Panc1 (cell line): ENCODE measurements at regions of chr11 and their contacts with region 1.

Region 1: GRCh38 chr11:77547863-77548551 is 41.7 kb upstream of the AQP11 start:
- DNase-seq: peak; percentile 66
- ATAC-seq: peak; percentile 88
- H3K4me3 ChIP-seq: no peak overlapping the region; a peak in 1 of 4 replicates
- H3K27ac ChIP-seq: no peak overlapping the region
- H3K4me1 ChIP-seq: peaks cover 4% of the 10 kb centered on the region; the same call in 1 of the 2 replicates
- H3K27me3 ChIP-seq: no peaks in the 10 kb centered on the region
- CTCF ChIP-seq: peak; percentile 78

Region 2: DNA sequence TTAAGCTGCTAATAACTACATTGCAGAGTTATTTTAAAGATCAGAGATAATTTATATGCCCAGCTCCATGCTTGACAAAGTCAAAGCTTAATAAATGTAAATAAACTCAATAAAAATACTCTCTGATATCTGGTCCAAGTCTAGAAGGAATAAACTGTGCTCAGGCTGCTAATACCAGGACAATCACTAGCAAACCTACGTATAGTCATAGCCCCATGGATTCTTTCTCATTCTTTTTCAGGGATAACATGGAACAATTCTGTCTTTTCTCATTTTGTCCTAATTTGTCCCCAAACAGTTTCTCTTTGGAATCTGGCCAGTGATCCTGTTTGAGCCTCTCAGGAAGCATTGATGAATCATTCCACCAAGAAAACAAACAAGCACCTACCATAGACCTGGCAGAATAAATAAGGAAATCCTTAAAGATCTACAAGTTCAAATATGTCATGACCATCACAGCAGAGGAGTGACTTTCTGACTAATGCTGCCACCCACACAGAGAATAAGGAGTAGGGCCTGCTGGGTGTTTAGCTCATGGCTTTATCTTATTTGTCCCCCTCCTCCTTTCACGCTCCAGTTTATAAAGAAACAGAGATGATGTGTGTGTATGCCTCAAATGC is 527.9 kb before region 1 on chr11:
- CTCF ChIA-PET with region 1: interaction called, 11 read pairs
- POLR2A ChIA-PET with region 1: no interaction called
- in situ Hi-C with region 1: no loop called
- intact Hi-C with region 1: no loop called
- DNase-seq: peak; percentile 66
- ATAC-seq: peak; percentile 95
- H3K4me3 ChIP-seq: no peak overlapping the region
- H3K27ac ChIP-seq: peak overlapping the region; percentile 64
- H3K4me1 ChIP-seq: peaks cover 21% of the 10 kb centered on the region
- H3K27me3 ChIP-seq: no peaks in the 10 kb centered on the region
- CTCF ChIP-seq: no peak

Region 3: DNA sequence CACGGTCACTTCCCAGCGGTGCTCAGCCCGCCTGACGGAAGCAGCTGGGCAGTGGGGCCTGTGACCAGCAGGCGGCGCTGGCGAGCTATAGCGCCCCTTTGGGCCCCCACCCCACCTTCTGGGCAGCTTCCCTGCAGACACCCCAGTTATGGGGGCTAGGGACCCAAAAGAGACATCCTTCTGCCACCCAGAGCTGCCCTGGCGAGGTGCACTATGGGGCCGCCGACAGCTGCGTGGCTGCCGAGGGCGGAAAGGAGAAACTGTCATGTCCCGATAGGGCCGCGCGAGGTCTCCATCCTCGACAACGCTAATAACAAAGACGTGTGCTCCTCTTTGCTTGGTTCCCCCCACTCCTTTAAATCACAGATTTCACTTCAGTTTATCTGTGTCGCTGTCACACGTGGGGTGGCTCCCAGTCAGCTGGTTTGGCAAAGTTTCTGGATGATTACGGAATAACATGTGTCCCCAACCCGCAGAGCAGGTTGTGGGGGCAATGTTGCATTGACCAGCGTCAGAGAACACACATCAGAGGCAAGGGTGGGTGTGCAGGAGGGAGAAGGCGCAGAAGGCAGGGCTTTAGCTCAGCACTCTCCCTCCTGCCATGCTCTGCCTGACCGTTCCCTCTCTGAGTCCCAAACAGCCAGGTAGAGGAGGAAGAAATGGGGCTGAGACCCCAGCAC is 420.6 kb before region 1 on chr11:
- CTCF ChIA-PET with region 1: interaction called, 3 read pairs
- POLR2A ChIA-PET with region 1: no interaction called
- in situ Hi-C with region 1: no loop called
- intact Hi-C with region 1: loop called (anchors 5 kb)
- DNase-seq: no peak
- ATAC-seq: peak; percentile 82
- H3K4me3 ChIP-seq: peak overlapping the region; percentile 41 to 60
- H3K27ac ChIP-seq: no peak overlapping the region
- H3K4me1 ChIP-seq: peaks cover 7% of the 10 kb centered on the region; the same call in 1 of the 2 replicates
- H3K27me3 ChIP-seq: no peaks in the 10 kb centered on the region
- CTCF ChIP-seq: peak; percentile 100

Region 4: GRCh38 chr11:77187776-77188632 is 360.0 kb before region 1 on chr11:
- CTCF ChIA-PET with region 1: no interaction called
- POLR2A ChIA-PET with region 1: no interaction called
- in situ Hi-C with region 1: no loop called
- intact Hi-C with region 1: loop called (anchors 2 kb)
- DNase-seq: peak; percentile 65
- ATAC-seq: peak; percentile 82
- H3K4me3 ChIP-seq: no peak overlapping the region
- H3K27ac ChIP-seq: no peak overlapping the region
- H3K4me1 ChIP-seq: no peaks in the 10 kb centered on the region
- H3K27me3 ChIP-seq: no peaks in the 10 kb centered on the region
- CTCF ChIP-seq: peak; percentile 98

Region 5: GRCh38 chr11:77195171-77195751 is 352.7 kb before region 1 on chr11:
- CTCF ChIA-PET with region 1: interaction called, 15 read pairs
- POLR2A ChIA-PET with region 1: no interaction called
- in situ Hi-C with region 1: no loop called
- intact Hi-C with region 1: loop called (anchors 2 kb)
- DNase-seq: no peak
- ATAC-seq: no peak
- H3K4me3 ChIP-seq: no peak overlapping the region
- H3K27ac ChIP-seq: no peak overlapping the region
- H3K4me1 ChIP-seq: no peaks in the 10 kb centered on the region
- H3K27me3 ChIP-seq: no peaks in the 10 kb centered on the region
- CTCF ChIP-seq: no peak